Mammary epithelial cell (primary cell): ENCODE measurements at regions of chr12 and their contacts with region 1.

Region 1: GRCh38 chr12:101939856-101940265 is 62.5 kb downstream of the DRAM1 start:
- DNase-seq: peak; percentile 44
- H3K4me3 ChIP-seq: no peak overlapping the region
- H3K27ac ChIP-seq: no peak overlapping the region
- H3K4me1 ChIP-seq: peaks cover 23% of the 10 kb centered on the region
- H3K27me3 ChIP-seq: no peaks in the 10 kb centered on the region
- CTCF ChIP-seq: peak; percentile 63 to 80

Region 2: GRCh38 chr12:101414533-101415119 is 525.2 kb before region 1 on chr12:
- CTCF ChIA-PET with region 1: no interaction called
- dilution Hi-C with region 1: no loop called
- in situ Hi-C with region 1: no loop called
- intact Hi-C with region 1: loop called (anchors 10 kb)
- DNase-seq: peak; percentile 42
- H3K4me3 ChIP-seq: no peak overlapping the region
- H3K27ac ChIP-seq: no peak overlapping the region
- H3K4me1 ChIP-seq: peaks cover 3% of the 10 kb centered on the region
- H3K27me3 ChIP-seq: no peaks in the 10 kb centered on the region
- CTCF ChIP-seq: peak; percentile 25 to 56

Region 3: DNA sequence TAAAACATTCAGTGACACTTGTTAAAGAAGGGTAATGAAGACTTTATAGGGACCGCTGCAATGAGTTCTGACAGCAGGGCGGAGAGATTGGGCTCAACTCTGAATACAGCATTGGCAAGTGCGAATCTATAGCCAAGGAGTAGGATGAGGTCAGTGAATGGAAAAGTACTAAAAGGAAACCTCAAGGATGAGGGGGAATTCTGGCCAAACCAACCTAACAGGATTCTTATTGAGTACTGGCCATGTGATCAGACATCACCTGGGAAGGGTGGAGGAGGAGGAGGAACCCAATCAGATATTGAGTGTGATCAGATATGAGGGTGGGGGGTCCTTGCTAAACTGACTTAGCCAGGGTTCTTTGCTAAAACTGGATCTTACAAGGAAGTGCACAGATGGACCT is 31.5 kb before region 1 on chr12:
- CTCF ChIA-PET with region 1: no interaction called
- dilution Hi-C with region 1: no loop called
- in situ Hi-C with region 1: no loop called
- intact Hi-C with region 1: no loop called
- DNase-seq: no peak
- H3K4me3 ChIP-seq: no peak overlapping the region
- H3K27ac ChIP-seq: no peak overlapping the region
- H3K4me1 ChIP-seq: no peaks in the 10 kb centered on the region
- H3K27me3 ChIP-seq: no peaks in the 10 kb centered on the region
- CTCF ChIP-seq: no peak

Region 4: GRCh38 chr12:101919447-101919846 is 20.4 kb before region 1 on chr12:
- CTCF ChIA-PET with region 1: no interaction called
- dilution Hi-C with region 1: no loop called
- in situ Hi-C with region 1: no loop called
- intact Hi-C with region 1: loop called (anchors 1 kb)
- DNase-seq: no peak
- H3K4me3 ChIP-seq: no peak overlapping the region
- H3K27ac ChIP-seq: no peak overlapping the region
- H3K4me1 ChIP-seq: no peaks in the 10 kb centered on the region
- H3K27me3 ChIP-seq: no peaks in the 10 kb centered on the region
- CTCF ChIP-seq: no peak

Region 5: DNA sequence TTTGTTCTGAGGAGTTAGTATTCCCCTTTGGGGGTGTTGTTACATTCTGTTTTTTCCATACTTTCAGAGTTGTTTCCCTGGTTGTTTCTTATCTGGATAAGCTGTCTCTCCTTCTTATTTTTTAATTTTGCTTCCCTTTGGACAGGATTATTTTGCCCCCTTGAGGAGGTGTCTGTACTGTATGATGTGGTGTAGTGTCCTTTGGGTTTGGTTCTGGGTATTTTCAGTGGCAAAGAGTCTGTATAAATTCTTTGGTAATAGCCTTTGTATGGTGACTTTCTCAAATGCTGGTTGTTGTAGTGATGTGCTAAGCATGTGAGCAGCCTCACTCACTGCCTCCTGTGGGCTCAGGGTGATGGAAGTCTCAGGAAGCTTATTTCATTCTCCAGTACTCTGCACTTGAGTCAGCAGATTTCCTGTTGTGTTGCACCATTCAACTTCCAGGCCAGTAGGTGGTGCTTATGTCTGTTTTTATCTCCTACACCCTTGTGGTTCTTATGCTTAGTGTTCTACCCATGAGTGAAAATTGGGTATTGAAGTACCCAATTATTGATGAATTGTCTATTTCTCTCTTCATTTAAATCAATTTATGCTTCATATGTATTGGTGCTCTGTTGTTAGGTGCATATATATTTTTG is 361.1 kb after region 1 on chr12:
- CTCF ChIA-PET with region 1: no interaction called
- dilution Hi-C with region 1: no loop called
- in situ Hi-C with region 1: no loop called
- intact Hi-C with region 1: loop called (anchors 5 kb)
- DNase-seq: peak; percentile 63
- H3K4me3 ChIP-seq: no peak overlapping the region
- H3K27ac ChIP-seq: no peak overlapping the region
- H3K4me1 ChIP-seq: no peaks in the 10 kb centered on the region
- H3K27me3 ChIP-seq: no peaks in the 10 kb centered on the region
- CTCF ChIP-seq: peak; percentile 57 to 62

Region 6: DNA sequence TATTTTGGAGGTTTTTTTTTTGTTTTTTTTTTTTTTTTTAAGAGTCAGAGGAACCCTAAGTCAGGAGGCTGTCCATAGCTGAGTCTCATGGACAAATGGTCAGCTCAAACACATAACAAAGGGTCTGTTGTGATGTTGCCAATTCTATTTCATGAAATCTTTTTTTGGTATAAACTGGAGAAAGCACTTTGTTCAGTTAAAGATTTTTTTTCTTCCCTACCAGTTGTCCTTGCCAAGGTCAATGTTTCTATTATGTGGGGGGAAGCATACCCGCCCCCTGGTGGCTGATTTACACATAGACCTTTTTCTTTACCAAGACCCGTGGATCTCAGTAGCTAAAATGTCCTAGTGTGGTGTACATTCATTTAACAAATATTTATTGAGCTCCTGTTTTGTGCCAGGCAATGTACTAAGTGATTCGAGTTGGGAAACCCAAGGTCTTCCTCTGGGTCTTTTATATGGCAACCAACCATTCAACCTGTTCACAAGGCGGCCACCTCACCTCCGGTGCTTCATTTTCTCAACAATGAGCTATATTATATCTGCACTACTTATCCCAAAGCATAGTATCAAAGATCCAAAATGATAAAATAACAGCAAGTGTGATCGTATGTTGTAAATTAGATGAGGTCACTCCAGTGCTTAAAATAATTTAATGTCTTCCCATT is 762.7 kb after region 1 on chr12:
- CTCF ChIA-PET with region 1: no interaction called
- dilution Hi-C with region 1: no loop called
- in situ Hi-C with region 1: no loop called
- intact Hi-C with region 1: loop called (anchors 1 kb)
- DNase-seq: peak; percentile 20
- H3K4me3 ChIP-seq: no peak overlapping the region
- H3K27ac ChIP-seq: no peak overlapping the region
- H3K4me1 ChIP-seq: no peaks in the 10 kb centered on the region
- H3K27me3 ChIP-seq: no peaks in the 10 kb centered on the region
- CTCF ChIP-seq: peak; percentile 41 to 52

Region 7: DNA sequence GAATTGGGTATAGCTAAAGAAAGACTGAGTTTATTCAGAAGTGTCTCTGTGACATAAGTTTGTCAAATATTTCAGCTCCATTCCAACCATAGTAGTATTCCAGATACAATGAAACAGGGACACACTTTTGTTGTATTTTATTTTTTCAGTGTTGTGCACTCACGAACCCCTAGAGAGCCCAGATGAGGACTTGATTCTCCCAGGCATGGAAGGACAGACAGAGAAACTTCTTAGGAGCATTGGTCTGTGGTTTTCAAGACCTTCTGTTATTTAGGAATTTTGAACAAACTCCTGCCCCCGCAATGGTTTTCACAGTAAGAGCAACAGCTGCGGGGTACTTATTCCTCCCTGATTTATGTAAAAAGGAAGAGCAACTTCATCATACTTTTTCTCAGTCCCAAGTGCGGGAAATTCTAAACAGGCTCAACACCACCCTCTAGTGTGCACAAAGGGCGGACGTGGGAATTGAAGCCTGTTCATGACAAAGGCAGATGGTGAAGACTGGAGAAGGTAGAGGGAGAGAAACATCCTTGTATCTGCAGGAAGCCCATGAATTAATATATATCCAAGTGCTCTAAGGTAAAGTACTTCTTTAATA is 829.6 kb after region 1 on chr12:
- CTCF ChIA-PET with region 1: interaction called, 4 read pairs
- dilution Hi-C with region 1: no loop called
- in situ Hi-C with region 1: no loop called
- intact Hi-C with region 1: loop called (anchors 10 kb)
- DNase-seq: peak; percentile 28
- H3K4me3 ChIP-seq: no peak overlapping the region
- H3K27ac ChIP-seq: no peak overlapping the region
- H3K4me1 ChIP-seq: no peaks in the 10 kb centered on the region
- H3K27me3 ChIP-seq: no peaks in the 10 kb centered on the region
- CTCF ChIP-seq: peak; percentile 65 to 72